ENCODE measurements at regions of chr7 and their contacts with region 1.

Region 1: GRCh38 chr7:126103582-126103981 is 1149.2 kb downstream of the GRM8 start:
- DNase-seq: no peak
- H3K4me3 ChIP-seq: no peak overlapping the region
- H3K27ac ChIP-seq: no peak overlapping the region
- H3K4me1 ChIP-seq: no peaks in the 10 kb centered on the region
- H3K27me3 ChIP-seq: no peaks in the 10 kb centered on the region
- CTCF ChIP-seq: no peak
- POLR2A ChIP-seq: no peak

Region 2: DNA sequence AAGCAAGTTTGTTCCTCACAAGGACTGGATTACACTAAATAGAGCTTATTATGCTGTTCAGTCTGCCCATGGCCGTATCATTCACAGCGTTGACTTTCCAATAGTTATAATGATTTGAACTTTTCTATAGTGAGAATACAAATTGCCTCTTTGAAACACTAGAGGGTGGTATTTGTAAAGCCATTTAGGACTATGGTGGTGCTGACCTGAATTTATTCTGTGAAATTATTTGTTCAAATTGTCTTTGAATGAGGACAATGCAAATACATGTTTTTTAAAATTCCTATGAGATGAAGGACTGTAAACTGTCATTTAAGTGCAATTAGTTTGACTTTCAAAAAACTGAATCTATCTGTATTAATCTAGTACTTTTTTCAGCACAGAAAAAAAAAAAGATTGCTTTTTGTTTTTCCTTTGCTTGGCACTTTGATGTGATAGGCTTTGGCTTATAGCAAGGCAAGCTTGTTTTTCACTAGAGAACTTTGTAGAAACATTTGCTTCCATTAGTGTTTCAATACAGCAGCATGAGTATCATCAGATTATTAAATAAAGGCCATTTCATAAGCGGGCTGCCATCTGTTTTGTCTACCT is 1948.1 kb before region 1 on chr7:
- intact Hi-C with region 1: loop called (anchors 5 kb)
- DNase-seq: no peak
- H3K4me3 ChIP-seq: no peak overlapping the region
- H3K27ac ChIP-seq: no peak overlapping the region
- H3K4me1 ChIP-seq: no peaks in the 10 kb centered on the region
- H3K27me3 ChIP-seq: no peaks in the 10 kb centered on the region
- CTCF ChIP-seq: peak in 1 of 3 experiments; percentile 15
- POLR2A ChIP-seq: no peak

Region 3: DNA sequence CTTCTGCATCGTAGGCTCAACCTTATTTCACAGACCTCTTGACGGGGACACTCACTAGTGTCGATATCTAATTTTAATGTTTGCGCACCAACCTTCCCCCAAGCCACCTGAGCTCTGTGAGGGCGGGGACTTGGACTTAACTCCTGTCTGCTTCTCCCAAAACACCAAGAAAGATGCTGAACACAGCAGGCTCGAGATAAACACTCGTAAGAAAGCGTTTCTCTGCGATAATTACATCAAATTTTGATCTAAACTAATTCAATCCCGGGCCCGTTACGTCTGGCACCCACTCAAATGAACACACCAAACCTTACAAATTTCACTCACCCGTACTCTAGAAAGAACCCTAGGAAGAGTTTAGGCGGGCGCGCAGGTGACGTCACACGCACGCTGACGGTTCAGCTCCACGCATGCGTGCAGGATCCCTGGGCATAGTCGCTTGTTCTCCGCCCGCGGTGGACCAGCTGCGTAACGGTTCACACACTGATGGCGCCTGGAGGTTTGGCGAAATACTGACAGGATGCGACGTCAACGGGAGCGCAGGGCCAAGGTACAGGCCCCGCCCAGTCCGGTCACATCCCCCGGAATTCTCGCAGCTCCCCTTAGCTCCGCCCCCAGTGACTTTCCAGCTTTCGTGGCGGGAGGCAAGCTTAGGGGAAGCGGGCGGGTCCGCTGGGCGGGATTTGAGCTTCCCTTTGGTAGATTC is 1174.0 kb before region 1 on chr7 and contains the start of gene POT1:
- intact Hi-C with region 1: no loop called
- DNase-seq: peak; percentile 97 to 99
- H3K4me3 ChIP-seq: peak within 1 kb of the TSS; percentile 54 to 75
- H3K27ac ChIP-seq: peak within 1 kb of the TSS; percentile 77
- H3K4me1 ChIP-seq: peaks cover 12% of the 10 kb centered on the region
- H3K27me3 ChIP-seq: no peaks in the 10 kb centered on the region
- CTCF ChIP-seq: no peak
- POLR2A ChIP-seq: no peak
- total RNA-seq, gene POT1: 30.9 TPM

Region 4: DNA sequence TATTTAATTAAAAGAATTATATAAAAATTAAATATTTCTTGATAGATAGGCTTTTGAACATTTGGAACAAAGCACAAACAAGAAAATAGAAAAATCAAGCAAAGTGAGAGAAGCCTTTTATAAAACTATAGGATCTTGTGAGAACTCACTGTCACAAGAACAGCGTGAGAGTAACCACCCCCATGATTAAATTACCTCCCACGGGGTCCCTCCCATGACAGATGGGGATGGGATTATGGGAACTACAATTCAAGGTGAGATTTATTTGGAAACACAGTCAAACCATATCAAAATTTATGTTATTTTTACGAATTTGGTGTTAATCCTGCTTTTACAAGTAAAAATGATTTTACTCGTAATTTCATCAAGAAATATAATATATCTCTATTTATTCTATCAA is 37.8 kb before region 1 on chr7:
- intact Hi-C with region 1: no loop called
- DNase-seq: no peak
- H3K4me3 ChIP-seq: no peak overlapping the region
- H3K27ac ChIP-seq: no peak overlapping the region
- H3K4me1 ChIP-seq: no peaks in the 10 kb centered on the region
- H3K27me3 ChIP-seq: no peaks in the 10 kb centered on the region
- CTCF ChIP-seq: no peak
- POLR2A ChIP-seq: no peak

Region 5: DNA sequence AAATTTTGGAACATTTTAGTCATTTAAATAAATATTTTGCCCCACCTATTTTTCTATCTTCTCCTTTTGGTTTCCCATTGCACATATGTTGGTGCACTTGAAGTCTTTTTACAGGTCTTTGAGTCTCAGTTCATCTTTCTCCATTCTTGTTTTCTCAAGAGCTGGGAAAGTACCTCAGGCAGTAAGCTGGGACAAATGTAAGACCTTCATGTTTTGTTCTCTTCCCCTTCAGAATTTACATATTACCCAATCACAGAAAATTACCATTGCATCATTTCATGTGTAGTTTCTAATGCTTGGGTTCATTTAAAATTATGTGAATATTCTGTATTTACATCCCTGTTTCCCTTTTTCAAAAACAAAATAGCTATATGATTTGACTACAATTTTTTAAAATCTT is 24.0 kb before region 1 on chr7:
- intact Hi-C with region 1: no loop called
- DNase-seq: no peak
- H3K4me3 ChIP-seq: no peak overlapping the region
- H3K27ac ChIP-seq: no peak overlapping the region
- H3K4me1 ChIP-seq: no peaks in the 10 kb centered on the region
- H3K27me3 ChIP-seq: no peaks in the 10 kb centered on the region
- CTCF ChIP-seq: no peak
- POLR2A ChIP-seq: no peak

Measured in vagina (tissue), 2 donors.